RWPE1 (cell line): ENCODE measurements at regions of chr5 and their contacts with region 1.

Region 1: GRCh38 chr5:88248743-88249540 is 19.7 kb downstream of the TMEM161B start:
- DNase-seq: no peak
- H3K27ac ChIP-seq: no peak overlapping the region
- CTCF ChIP-seq: no peak

Region 2: GRCh38 chr5:88268385-88269184 is 19.6 kb after region 1 on chr5 and contains the start of gene TMEM161B:
- CTCF ChIA-PET with region 1: interaction called, 12 read pairs
- POLR2A ChIA-PET with region 1: no interaction called
- DNase-seq: peak; percentile 85
- H3K27ac ChIP-seq: peak within 1 kb of the TSS; percentile 85
- CTCF ChIP-seq: no peak